Activated naive CD4-positive, alpha-beta T cell treated with anti-CD3 and anti-CD28 coated beads, Interleukin-2, amount 10 ng/mL, durations not matched to agents 7 days and 5 days (primary cell): ENCODE measurements at regions of chr1 and their contacts with region 1.

Region 1: DNA sequence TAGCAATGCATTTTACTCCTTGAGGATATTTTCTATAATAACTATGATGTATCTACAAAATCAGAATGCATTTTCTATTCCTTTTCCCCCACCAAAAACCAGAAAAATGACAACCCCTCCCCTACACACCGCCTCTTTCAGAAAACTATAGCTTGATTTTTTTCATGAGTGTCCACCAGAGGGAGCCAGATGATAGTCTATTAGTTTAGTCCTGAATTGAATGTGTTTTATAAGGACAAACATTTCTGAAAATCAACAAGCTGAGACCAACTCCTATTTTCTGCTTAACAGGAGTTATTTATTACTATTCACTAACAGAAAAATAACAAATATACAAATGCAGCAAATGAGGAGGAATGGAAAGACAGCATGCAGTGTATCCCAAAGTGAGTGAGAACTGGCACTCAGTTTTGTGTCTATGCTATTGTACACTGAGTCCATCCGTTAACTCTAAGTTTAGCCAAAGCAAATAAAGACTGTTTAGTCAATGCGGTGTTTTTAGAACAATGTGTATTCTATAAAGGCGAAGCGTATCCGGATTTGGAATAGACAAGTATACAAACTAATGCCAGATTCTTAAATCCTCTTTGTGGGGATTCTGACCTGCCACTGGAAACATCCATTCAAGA is 182.6 kb downstream of the VAV3 start:
- DNase-seq: peak; percentile 40
- H3K4me3 Mint-ChIP-seq: no peak overlapping the region
- H3K27ac Mint-ChIP-seq: no peak overlapping the region
- H3K4me1 Mint-ChIP-seq: peaks cover 25% of the 10 kb centered on the region
- H3K27me3 Mint-ChIP-seq: no peaks in the 10 kb centered on the region

Region 2: GRCh38 chr1:107851418-107851817 is 69.1 kb after region 1 on chr1:
- CTCF ChIA-PET with region 1: no interaction called
- DNase-seq: no peak
- H3K4me3 Mint-ChIP-seq: no peak overlapping the region
- H3K27ac Mint-ChIP-seq: no peak overlapping the region
- H3K4me1 Mint-ChIP-seq: peaks cover 7% of the 10 kb centered on the region
- H3K27me3 Mint-ChIP-seq: no peaks in the 10 kb centered on the region

Region 3: GRCh38 chr1:107963601-107964335 is 181.4 kb after region 1 on chr1:
- CTCF ChIA-PET with region 1: interaction called, 25 read pairs
- DNase-seq: peak; percentile 62
- H3K4me3 Mint-ChIP-seq: peak overlapping the region; percentile 82
- H3K27ac Mint-ChIP-seq: peak overlapping the region; percentile 93
- H3K4me1 Mint-ChIP-seq: peaks cover 34% of the 10 kb centered on the region
- H3K27me3 Mint-ChIP-seq: peaks cover 14% of the 10 kb centered on the region

Region 4: GRCh38 chr1:108118018-108118902 is 335.9 kb after region 1 on chr1:
- CTCF ChIA-PET with region 1: interaction called, 249 read pairs
- DNase-seq: no peak
- H3K4me3 Mint-ChIP-seq: no peak overlapping the region
- H3K27ac Mint-ChIP-seq: no peak overlapping the region
- H3K4me1 Mint-ChIP-seq: peaks cover 5% of the 10 kb centered on the region
- H3K27me3 Mint-ChIP-seq: peaks cover 26% of the 10 kb centered on the region

Region 5: GRCh38 chr1:108125312-108126138 is 343.2 kb after region 1 on chr1:
- CTCF ChIA-PET with region 1: interaction called, 249 read pairs
- DNase-seq: peak; percentile 74
- H3K4me3 Mint-ChIP-seq: no peak overlapping the region
- H3K27ac Mint-ChIP-seq: no peak overlapping the region
- H3K4me1 Mint-ChIP-seq: no peaks in the 10 kb centered on the region
- H3K27me3 Mint-ChIP-seq: peaks cover 17% of the 10 kb centered on the region

Region 6: DNA sequence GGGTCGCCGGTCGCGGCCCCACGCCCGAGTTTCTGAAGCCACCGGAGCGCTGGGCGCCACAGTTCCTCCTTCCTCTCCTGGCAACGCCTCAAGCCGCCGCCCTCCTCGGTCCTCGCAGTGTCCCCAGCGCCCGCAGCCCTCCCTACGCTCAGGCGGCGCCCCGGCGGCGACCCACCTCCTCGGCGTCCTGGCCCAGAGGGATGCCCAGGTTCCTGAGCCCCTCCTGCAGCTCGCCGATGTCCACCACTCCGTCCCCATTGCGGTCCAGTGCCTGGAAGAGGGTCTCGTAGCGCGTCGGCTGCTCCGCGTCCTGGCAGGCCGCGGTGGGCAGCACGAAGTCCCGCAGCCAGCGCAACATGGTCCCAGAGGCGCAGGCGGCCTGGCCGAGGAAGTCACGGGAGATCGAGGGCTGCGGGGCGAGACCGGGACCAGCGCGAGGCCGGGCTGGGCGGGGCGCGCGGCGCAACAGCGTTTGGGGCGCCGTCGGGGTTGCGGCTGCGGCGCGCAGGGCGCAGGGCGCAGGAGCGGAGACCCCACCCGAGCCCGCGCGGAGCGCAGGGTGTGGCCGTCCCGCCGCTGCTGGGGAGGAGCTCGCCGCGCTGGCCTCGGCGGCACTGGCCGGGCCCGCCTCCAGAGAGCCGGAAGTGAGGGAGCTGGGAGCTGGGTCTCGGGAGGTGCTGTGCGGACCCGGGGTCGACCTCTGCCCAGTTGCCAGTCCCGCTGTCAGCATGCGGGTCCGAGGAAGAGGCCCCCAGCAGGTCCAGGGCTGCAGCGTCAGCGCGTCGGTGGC is 417.6 kb after region 1 on chr1 and contains the start of gene SLC25A24:
- CTCF ChIA-PET with region 1: interaction called, 16 read pairs
- DNase-seq: peak; percentile 87
- H3K4me3 Mint-ChIP-seq: peak within 1 kb of the TSS; percentile 83
- H3K27ac Mint-ChIP-seq: peak within 1 kb of the TSS; percentile 87
- H3K4me1 Mint-ChIP-seq: peaks cover 29% of the 10 kb centered on the region
- H3K27me3 Mint-ChIP-seq: no peaks in the 10 kb centered on the region